Breast epithelium (tissue), 4 donors: ENCODE measurements at regions of chr1 and their contacts with region 1.

Region 1: DNA sequence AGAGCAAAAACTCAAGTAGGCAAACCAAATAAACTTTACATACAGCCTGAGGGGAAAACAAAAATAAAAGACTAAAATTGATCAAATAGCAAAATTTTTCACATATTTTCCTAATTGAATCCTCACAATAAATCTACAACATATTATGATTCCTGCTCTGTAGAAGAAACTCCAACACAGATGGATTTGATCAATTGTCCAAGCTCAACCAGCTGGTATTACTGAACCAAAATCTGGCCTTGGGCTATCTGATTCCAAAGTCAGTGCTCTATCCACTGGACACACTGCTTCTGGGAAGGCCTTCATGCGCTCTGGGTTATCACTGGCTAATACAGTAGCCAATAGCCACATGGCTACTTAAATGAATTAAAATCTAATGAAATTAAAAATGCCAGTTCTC is 39.3 kb downstream of the PCNX2 start:
- DNase-seq: no peak
- H3K4me3 ChIP-seq: no peak overlapping the region
- H3K27ac ChIP-seq: no peak overlapping the region
- H3K4me1 ChIP-seq: no peaks in the 10 kb centered on the region
- H3K27me3 ChIP-seq: no peaks in the 10 kb centered on the region
- CTCF ChIP-seq: no peak
- POLR2A ChIP-seq: no peak

Region 2: DNA sequence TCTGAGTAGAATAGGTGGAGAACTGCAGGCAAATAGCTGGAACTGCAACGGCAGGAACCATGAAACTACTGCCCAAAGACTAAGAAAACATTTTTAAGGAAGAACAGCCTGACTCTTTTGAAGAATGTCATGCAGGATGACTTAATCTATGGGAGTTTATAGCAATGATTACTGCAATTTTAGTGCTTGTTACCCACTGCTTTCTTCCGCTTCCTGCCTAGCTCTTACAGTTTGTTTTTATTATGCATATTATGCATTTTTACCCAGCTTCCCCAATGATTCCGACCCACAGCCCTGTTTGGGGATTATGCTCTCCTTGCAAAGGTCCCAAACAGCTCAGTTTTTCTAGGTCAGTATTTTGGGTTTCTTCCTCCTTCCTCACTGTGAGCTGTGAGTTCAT is 31.9 kb before region 1 on chr1:
- intact Hi-C with region 1: loop called (anchors 2 kb)
- DNase-seq: no peak
- H3K4me3 ChIP-seq: no peak overlapping the region
- H3K27ac ChIP-seq: no peak overlapping the region
- H3K4me1 ChIP-seq: no peaks in the 10 kb centered on the region
- H3K27me3 ChIP-seq: no peaks in the 10 kb centered on the region
- CTCF ChIP-seq: no peak
- POLR2A ChIP-seq: no peak

Region 3: GRCh38 chr1:233435622-233436021 is 179.4 kb after region 1 on chr1:
- intact Hi-C with region 1: no loop called
- DNase-seq: no peak
- H3K4me3 ChIP-seq: no peak overlapping the region
- H3K27ac ChIP-seq: no peak overlapping the region
- H3K4me1 ChIP-seq: no peaks in the 10 kb centered on the region
- H3K27me3 ChIP-seq: no peaks in the 10 kb centered on the region
- CTCF ChIP-seq: no peak
- POLR2A ChIP-seq: no peak